ENCODE measurements at regions of chr3 and their contacts with region 1.

Region 1: GRCh38 chr3:158659454-158660237 is 12.8 kb downstream of the LXN start:
- DNase-seq: peak; percentile 61
- H3K4me3 ChIP-seq: no peak overlapping the region; a peak in 1 of 4 replicates
- H3K27ac ChIP-seq: peak overlapping the region in 1 of 2 experiments; percentile 28; a peak in 2 of 4 replicates
- H3K4me1 ChIP-seq: no peaks in the 10 kb centered on the region
- H3K27me3 ChIP-seq: no peaks in the 10 kb centered on the region
- CTCF ChIP-seq: peak; percentile 84
- EP300 ChIP-seq: no peak
- RAD21 ChIP-seq: peak; percentile 64

Region 2: DNA sequence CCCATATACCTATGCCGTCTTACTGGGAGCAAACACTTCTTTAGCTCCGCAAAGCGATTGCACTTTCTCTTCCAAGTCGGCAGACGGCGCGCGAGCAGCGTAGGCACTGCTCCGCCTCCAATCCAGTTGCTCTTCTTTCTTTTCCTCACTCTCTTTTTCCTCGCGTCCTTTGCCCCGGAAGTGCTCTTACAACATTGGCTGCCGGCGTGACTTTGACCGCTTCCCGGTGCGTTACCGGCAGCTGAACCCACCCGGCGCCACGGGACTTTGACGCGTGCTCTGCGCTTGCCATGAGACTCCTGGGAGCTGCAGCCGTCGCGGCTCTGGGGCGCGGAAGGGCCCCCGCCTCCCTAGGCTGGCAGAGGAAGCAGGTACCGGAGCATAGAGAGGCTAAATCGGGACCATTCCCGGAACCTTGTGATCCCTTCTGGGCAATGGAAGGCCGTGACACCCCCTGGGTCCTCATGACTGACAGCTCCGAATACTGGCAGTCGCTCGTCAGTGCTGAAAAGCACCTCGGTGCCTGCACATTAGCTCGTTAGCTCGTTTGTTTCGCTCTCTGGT is 15.2 kb before region 1 on chr3 and contains the start of gene GFM1:
- CTCF ChIA-PET with region 1: interaction called, 39 read pairs
- POLR2A ChIA-PET with region 1: no interaction called
- DNase-seq: peak; percentile 88
- H3K4me3 ChIP-seq: peak within 1 kb of the TSS; percentile 96 to 98
- H3K27ac ChIP-seq: peak within 1 kb of the TSS; percentile 83
- H3K4me1 ChIP-seq: peaks cover 6 to 12% of the 10 kb centered on the region in 2 experiments; a peak in 3 of 4 replicates
- H3K27me3 ChIP-seq: no peaks in the 10 kb centered on the region
- CTCF ChIP-seq: peak; percentile 81
- EP300 ChIP-seq: no peak
- RAD21 ChIP-seq: peak; percentile 56
- polyA plus RNA-seq, gene GFM1: 25.2 and 31.7 TPM in 2 replicates

Region 3: GRCh38 chr3:158672293-158673176 is 12.9 kb after region 1 on chr3 and contains the start of gene LXN:
- CTCF ChIA-PET with region 1: interaction called, 10 read pairs
- POLR2A ChIA-PET with region 1: no interaction called
- DNase-seq: peak; percentile 11
- H3K4me3 ChIP-seq: no peak within 1 kb of the TSS
- H3K27ac ChIP-seq: no peak within 1 kb of the TSS
- H3K4me1 ChIP-seq: no peaks in the 10 kb centered on the region
- H3K27me3 ChIP-seq: no peaks in the 10 kb centered on the region
- CTCF ChIP-seq: no peak
- EP300 ChIP-seq: no peak
- RAD21 ChIP-seq: no peak
- polyA plus RNA-seq, gene LXN: not detected in 2 replicates

Region 4: GRCh38 chr3:158679547-158680000 is 19.9 kb after region 1 on chr3:
- CTCF ChIA-PET with region 1: interaction called, 11 read pairs
- POLR2A ChIA-PET with region 1: no interaction called
- DNase-seq: no peak
- H3K4me3 ChIP-seq: no peak overlapping the region
- H3K27ac ChIP-seq: peak overlapping the region in 1 of 2 experiments; percentile 27; a peak in 2 of 4 replicates
- H3K4me1 ChIP-seq: peaks cover 0 to 14% of the 10 kb centered on the region in 2 experiments; a peak in 2 of 4 replicates
- H3K27me3 ChIP-seq: no peaks in the 10 kb centered on the region
- CTCF ChIP-seq: no peak
- EP300 ChIP-seq: no peak
- RAD21 ChIP-seq: no peak

Region 5: GRCh38 chr3:158790901-158791589 is 131.4 kb after region 1 on chr3:
- CTCF ChIA-PET with region 1: interaction called, 61 read pairs
- POLR2A ChIA-PET with region 1: interaction called, 4 read pairs
- DNase-seq: peak; percentile 45
- H3K4me3 ChIP-seq: peak overlapping the region in 1 of 2 experiments; percentile 33; a peak in 1 of 4 replicates
- H3K27ac ChIP-seq: no peak overlapping the region
- H3K4me1 ChIP-seq: peaks cover 0 to 17% of the 10 kb centered on the region in 2 experiments; a peak in 3 of 4 replicates
- H3K27me3 ChIP-seq: no peaks in the 10 kb centered on the region
- CTCF ChIP-seq: peak; percentile 92
- EP300 ChIP-seq: no peak
- RAD21 ChIP-seq: peak; percentile 90